ENCODE measurements at regions of chr4 and their contacts with region 1.

Region 1: GRCh38 chr4:2468445-2469192 is at the start of gene RNF4:
- DNase-seq: peak; percentile 98
- H3K4me3 Mint-ChIP-seq: peak within 1 kb of the TSS; percentile 97
- H3K27ac Mint-ChIP-seq: peak within 1 kb of the TSS; percentile 98
- H3K4me1 Mint-ChIP-seq: peaks cover 47% of the 10 kb centered on the region
- H3K27me3 Mint-ChIP-seq: no peaks in the 10 kb centered on the region
- total RNA-seq, gene RNF4: 69.2 to 73.1 TPM

Region 2: GRCh38 chr4:1721004-1721665 is 747.5 kb before region 1 on chr4 and contains the starts of genes TACC3 and TMEM129:
- CTCF ChIA-PET with region 1: no interaction called
- intact Hi-C with region 1: loop called (anchors 10 kb)
- DNase-seq: peak; percentile 96
- H3K4me3 Mint-ChIP-seq: peak within 1 kb of the TSS; percentile 94
- H3K27ac Mint-ChIP-seq: peak within 1 kb of the TSS; percentile 98
- H3K4me1 Mint-ChIP-seq: peaks cover 53% of the 10 kb centered on the region
- H3K27me3 Mint-ChIP-seq: no peaks in the 10 kb centered on the region
- total RNA-seq, gene TACC3: 246 to 264 TPM
- total RNA-seq, gene TMEM129: 19.0 to 19.8 TPM

Region 3: GRCh38 chr4:2262143-2262943 is 206.3 kb before region 1 on chr4:
- CTCF ChIA-PET with region 1: no interaction called
- intact Hi-C with region 1: loop called (anchors 1 kb)
- DNase-seq: peak; percentile 98
- H3K4me3 Mint-ChIP-seq: peak overlapping the region; percentile 69
- H3K27ac Mint-ChIP-seq: no peak overlapping the region
- H3K4me1 Mint-ChIP-seq: peaks cover 2% of the 10 kb centered on the region
- H3K27me3 Mint-ChIP-seq: no peaks in the 10 kb centered on the region

Region 4: GRCh38 chr4:2412885-2413716 is 55.5 kb before region 1 on chr4:
- CTCF ChIA-PET with region 1: no interaction called
- intact Hi-C with region 1: loop called (anchors 1 kb)
- DNase-seq: peak; percentile 94
- H3K4me3 Mint-ChIP-seq: peak overlapping the region; percentile 63
- H3K27ac Mint-ChIP-seq: peak overlapping the region; percentile 96
- H3K4me1 Mint-ChIP-seq: peaks cover 54% of the 10 kb centered on the region
- H3K27me3 Mint-ChIP-seq: peaks cover 15% of the 10 kb centered on the region

Region 5: GRCh38 chr4:2484993-2485392 is 16.4 kb after region 1 on chr4:
- CTCF ChIA-PET with region 1: interaction called, 4 read pairs
- intact Hi-C with region 1: loop called (anchors 1 kb)
- DNase-seq: peak; percentile 85
- H3K4me3 Mint-ChIP-seq: peak overlapping the region; percentile 46
- H3K27ac Mint-ChIP-seq: peak overlapping the region; percentile 68
- H3K4me1 Mint-ChIP-seq: peaks cover 87% of the 10 kb centered on the region
- H3K27me3 Mint-ChIP-seq: no peaks in the 10 kb centered on the region

Region 6: DNA sequence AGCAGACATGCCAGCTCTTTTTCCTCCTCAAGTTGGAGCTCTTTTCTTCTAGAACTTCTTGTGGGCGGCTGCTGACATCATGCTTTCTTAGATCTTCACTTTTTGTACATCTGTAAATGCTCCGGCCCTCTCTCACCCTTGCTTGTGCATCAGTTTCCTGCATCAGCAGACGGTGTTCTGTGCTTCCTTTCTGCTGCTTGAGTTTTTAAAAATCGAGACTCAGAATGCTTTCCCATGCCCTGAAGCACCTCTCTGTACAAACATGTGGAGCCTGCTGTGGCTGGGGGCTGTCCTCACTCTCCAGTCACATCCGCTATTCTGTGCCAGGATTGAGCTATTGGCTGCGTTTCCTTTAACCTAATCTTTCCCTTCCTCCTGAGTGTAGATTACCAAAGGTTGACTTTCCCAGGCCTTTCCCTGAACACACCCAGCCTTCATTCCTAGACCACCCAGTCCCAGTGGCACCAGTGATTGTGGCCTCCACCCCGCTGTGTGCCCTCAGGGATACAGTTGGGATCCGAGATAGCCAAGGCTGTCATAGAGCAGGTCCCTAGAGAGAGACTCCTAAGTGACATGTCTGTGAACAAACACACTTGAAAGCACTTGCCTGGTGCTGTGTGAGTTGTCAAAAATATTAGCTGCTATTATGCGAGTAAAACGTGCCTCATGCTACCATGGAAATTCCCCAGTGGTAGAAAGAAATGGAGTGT is 245.6 kb after region 1 on chr4:
- CTCF ChIA-PET with region 1: no interaction called
- intact Hi-C with region 1: loop called (anchors 2 kb)
- DNase-seq: peak; percentile 81
- H3K4me3 Mint-ChIP-seq: peak overlapping the region; percentile 7
- H3K27ac Mint-ChIP-seq: peak overlapping the region; percentile 86
- H3K4me1 Mint-ChIP-seq: peaks cover 40% of the 10 kb centered on the region
- H3K27me3 Mint-ChIP-seq: no peaks in the 10 kb centered on the region

Region 7: DNA sequence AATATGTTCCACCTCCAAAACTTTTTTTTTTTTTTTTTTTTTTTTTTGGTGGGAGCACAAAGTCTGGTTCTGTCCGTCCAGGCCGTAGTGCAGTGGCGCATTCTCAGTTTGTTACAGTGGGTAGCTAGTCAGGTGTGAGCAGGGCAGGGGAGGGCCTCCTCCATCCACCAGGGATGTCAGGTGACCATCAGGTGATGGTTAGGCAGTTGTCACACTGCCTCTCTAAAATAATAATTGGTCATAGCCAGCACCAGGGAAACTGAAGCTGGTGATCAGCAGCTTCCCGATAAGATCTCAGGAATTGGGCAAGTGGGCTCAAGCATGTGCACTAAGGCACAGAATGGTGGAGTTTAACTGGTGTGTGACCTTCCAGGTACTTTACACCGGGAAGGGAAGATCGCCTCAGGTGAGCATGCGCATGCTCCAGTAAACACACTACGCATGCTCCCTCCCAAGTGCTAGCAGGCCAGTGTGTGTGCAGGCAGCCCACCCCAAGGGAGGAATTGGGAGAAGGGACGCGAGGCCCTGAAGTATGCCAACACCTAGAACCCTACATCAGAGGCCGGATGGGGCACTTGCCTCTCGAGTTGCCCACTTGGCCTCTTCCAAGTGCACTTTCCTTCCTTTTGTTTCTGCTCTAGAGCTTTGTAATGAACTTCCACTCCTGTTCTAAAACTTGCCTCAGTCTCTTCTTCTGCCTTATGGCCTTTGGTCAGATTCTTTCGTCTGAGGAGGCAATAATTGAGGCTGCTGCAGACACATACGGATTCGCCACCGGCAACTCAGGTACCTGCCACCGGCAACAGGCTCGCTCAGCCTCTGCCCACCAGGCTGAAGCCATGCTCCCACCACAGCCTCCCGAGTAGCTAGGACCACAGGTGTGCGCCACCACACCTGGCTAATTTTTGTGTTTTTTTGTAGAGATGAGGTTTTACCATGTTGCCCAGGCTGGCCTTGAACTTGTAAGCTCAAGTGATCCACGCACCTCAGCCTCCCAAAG is 260.6 kb after region 1 on chr4:
- CTCF ChIA-PET with region 1: no interaction called
- intact Hi-C with region 1: no loop called
- DNase-seq: no peak
- H3K4me3 Mint-ChIP-seq: no peak overlapping the region
- H3K27ac Mint-ChIP-seq: no peak overlapping the region
- H3K4me1 Mint-ChIP-seq: peaks cover 3% of the 10 kb centered on the region
- H3K27me3 Mint-ChIP-seq: no peaks in the 10 kb centered on the region

Region 8: GRCh38 chr4:2934813-2935761 is 466.5 kb after region 1 on chr4:
- CTCF ChIA-PET with region 1: no interaction called
- intact Hi-C with region 1: loop called (anchors 10 kb)
- DNase-seq: peak; percentile 97
- H3K4me3 Mint-ChIP-seq: peak overlapping the region; percentile 89
- H3K27ac Mint-ChIP-seq: peak overlapping the region; percentile 96
- H3K4me1 Mint-ChIP-seq: peaks cover 57% of the 10 kb centered on the region
- H3K27me3 Mint-ChIP-seq: no peaks in the 10 kb centered on the region